ENCODE measurements at regions of chr1 and their contacts with region 1.

Region 1: GRCh38 chr1:44609412-44609767 is 64.9 kb downstream of the TMEM53 start:
- DNase-seq: no peak
- ATAC-seq: peak; percentile 83

Region 2: GRCh38 chr1:44405041-44405797 is 204.2 kb before region 1 on chr1 and contains the start of gene RNF220:
- intact Hi-C with region 1: no loop called
- DNase-seq: peak; percentile 75
- ATAC-seq: peak; percentile 80
- total RNA-seq, gene RNF220: 76.4 TPM

Region 3: DNA sequence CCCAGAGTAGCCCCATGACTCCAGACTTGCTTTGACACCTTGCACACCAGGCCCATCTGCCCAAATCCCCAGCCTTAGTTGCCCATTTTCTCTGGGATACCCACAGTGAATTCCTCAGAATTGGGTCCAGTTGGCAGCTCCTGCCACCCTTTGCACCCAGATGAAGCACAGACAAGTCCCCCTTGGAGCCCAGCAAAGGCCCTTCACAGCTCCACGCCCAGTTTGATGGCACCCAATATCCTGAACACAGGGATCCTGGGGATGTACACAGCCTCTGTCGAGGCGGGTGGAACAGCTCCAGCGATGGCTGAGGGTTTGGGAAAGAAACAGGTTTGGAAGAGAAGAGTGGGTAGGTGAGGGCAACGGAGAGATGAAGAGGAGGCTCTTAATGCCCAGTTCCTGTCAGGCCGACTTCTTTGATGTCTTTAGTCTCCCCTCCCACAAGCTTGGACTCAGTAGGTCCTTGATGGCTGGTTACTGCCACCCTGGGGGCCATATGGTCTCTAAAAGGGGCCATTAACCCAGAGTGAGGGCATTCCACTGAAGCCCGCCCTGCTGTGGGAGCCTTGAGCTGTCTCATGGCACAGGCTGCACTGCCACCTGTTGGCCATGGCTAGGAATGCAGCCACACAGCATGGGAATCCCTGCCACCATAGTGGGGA is 43.2 kb after region 1 on chr1:
- intact Hi-C with region 1: loop called (anchors 1 kb)
- DNase-seq: peak; percentile 84
- ATAC-seq: peak; percentile 79

Region 4: GRCh38 chr1:44662683-44663030 is 53.3 kb after region 1 on chr1:
- intact Hi-C with region 1: no loop called
- DNase-seq: no peak
- ATAC-seq: no peak